ENCODE measurements at regions of chr22 and their contacts with region 1.

Region 1: DNA sequence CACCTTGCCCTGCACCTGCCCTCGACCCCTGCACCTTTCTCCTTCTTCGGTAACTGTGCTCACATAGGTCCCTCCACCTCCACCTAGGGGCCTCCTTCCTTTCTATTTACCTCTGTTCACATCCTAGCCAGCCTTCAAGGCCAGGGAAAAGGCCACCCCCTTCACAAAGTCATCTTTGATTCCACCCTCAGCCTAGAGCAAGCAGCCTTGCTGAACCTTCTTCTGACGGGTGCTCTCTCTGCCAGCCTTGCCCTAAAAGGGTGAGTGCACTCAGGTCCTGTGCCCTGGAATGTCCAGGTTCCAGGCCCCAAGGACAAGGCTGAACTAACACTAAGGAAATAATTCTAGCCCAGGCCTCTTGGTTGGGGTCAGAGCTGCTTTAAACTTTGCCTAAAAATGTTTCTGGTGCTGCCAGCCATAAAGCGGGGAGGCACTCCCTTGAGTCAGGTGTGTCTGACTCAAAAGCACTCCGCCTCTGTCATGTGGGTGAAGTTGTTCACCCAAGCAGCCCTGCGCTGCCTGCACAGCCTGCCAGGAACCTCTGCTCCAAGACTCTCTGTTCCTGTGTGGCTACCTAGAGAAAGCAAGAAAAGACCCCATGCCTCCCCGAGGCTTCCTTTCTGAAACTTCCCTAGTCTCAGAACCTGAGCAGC is 9.2 kb upstream of the FAM83F start:
- DNase-seq: no peak
- H3K4me3 Mint-ChIP-seq: peak overlapping the region; percentile 38
- H3K27ac Mint-ChIP-seq: peak overlapping the region; percentile 87
- H3K4me1 Mint-ChIP-seq: peaks cover 33% of the 10 kb centered on the region
- H3K27me3 Mint-ChIP-seq: no peaks in the 10 kb centered on the region
- CTCF ChIP-seq: no peak

Region 2: DNA sequence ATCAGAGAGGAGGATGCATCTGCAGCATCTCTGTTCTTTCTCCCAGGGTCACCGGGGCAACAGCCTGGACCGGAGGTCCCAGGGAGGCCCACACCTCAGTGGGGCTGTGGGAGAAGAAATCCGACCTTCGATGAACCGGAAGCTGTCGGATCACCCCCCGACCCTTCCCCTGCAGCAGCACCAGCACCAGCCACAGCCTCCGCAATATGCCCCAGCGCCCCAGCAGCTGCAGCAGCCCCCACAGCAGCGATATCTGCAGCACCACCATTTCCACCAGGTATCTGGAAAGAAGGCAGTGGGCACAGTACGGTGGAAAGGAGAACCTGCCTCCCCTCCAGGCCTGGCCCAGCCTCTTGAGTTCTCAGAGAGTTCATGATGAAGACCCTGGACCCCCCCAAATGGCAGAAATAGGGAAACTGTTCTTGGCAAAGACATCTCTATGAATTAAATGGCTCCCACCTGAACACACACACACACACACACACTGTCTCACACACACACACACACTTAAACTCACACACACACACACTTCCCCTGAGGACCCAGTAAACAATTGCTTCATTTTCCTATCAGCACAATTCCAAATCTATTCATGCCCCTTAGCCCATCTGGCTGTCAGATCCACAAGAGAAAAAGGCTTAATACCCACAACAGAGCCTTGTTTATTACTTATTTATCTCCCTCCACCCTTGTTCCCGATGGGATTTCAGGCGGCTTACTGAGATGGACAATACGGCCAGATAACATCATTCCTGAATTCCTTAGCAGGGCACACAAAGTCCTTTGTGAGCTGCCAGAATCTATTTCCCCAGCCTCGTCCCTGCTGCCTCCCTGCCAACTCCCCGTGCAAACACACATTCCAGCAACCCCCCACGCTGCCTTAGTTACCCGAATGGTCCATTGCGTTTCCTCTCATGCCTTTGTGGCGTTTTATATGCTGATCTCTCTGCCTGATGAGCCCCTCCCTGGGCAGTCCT is 17.2 kb before region 1 on chr22:
- CTCF ChIA-PET with region 1: interaction called, 4 read pairs
- POLR2A ChIA-PET with region 1: interaction called, 6 read pairs
- intact Hi-C with region 1: loop called (anchors 2 kb)
- DNase-seq: no peak
- H3K4me3 Mint-ChIP-seq: no peak overlapping the region
- H3K27ac Mint-ChIP-seq: no peak overlapping the region
- H3K4me1 Mint-ChIP-seq: peaks cover 34% of the 10 kb centered on the region
- H3K27me3 Mint-ChIP-seq: peaks cover 11% of the 10 kb centered on the region
- CTCF ChIP-seq: no peak

Measured in MCF 10A (cell line).